Activated CD4-positive, alpha-beta memory T cell treated with anti-CD3 and anti-CD28 coated beads for 36 hours (primary cell): ENCODE measurements at regions of chr19 and their contacts with region 1.

Region 1: GRCh38 chr19:49896863-49897621 is at the start of gene IL4I1:
- DNase-seq: peak; percentile 87
- H3K4me3 Mint-ChIP-seq: peak within 1 kb of the TSS; percentile 87
- H3K27ac Mint-ChIP-seq: peak within 1 kb of the TSS; percentile 100
- H3K4me1 Mint-ChIP-seq: peaks cover 62% of the 10 kb centered on the region
- H3K27me3 Mint-ChIP-seq: no peaks in the 10 kb centered on the region
- total RNA-seq, gene IL4I1: 108 to 111 TPM

Region 2: DNA sequence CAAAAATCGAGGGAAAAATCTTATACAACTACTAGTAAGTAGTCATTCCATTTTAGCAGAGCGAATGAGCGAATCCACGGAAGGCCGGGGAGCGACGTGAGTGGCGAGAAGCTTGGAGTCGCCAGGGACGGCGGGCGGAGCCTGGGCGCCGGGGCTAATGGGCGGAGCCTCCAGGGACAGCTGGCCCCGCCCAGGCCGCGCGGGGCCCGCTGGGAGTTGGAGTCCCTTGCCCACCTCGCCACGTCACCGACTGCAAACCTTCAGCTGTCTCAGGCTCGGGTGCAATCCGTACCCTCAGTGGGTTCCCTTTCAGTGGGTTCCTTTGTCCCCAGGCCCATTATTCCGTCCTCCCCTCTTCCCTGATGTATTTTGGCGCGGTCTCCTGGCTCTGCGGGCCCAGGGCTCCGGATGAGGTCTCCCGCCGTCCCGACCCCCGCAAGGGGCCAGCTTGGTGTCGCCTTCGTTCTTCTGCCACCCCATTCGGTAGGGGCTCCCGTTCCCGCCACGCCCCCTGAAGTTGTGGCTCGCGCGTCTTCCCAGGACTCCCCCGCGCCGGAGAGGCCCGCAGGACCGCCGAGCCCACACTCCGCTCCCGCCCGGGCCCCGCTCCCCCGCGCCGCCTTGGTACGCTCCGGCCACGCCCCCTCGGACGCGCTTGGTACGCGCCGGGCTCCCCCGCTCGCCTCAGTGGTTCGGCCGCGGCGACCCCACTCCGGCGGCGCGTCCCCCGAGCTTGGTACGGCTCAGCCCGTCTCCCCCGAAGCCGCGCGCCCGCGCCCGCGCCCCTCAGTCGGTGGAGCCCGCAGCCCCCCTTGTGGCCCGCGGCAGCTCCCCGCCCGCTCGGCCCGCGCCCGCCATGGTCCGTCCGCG is 46.3 kb before region 1 on chr19 and contains the start of gene PTOV1:
- CTCF ChIA-PET with region 1: no interaction called
- POLR2A ChIA-PET with region 1: no interaction called
- intact Hi-C with region 1: loop called (anchors 2 kb)
- DNase-seq: peak; percentile 93
- H3K4me3 Mint-ChIP-seq: peak within 1 kb of the TSS; percentile 86
- H3K27ac Mint-ChIP-seq: peak within 1 kb of the TSS; percentile 95
- H3K4me1 Mint-ChIP-seq: peaks cover 41% of the 10 kb centered on the region
- H3K27me3 Mint-ChIP-seq: no peaks in the 10 kb centered on the region
- total RNA-seq, gene PTOV1: 105 to 108 TPM

Region 3: DNA sequence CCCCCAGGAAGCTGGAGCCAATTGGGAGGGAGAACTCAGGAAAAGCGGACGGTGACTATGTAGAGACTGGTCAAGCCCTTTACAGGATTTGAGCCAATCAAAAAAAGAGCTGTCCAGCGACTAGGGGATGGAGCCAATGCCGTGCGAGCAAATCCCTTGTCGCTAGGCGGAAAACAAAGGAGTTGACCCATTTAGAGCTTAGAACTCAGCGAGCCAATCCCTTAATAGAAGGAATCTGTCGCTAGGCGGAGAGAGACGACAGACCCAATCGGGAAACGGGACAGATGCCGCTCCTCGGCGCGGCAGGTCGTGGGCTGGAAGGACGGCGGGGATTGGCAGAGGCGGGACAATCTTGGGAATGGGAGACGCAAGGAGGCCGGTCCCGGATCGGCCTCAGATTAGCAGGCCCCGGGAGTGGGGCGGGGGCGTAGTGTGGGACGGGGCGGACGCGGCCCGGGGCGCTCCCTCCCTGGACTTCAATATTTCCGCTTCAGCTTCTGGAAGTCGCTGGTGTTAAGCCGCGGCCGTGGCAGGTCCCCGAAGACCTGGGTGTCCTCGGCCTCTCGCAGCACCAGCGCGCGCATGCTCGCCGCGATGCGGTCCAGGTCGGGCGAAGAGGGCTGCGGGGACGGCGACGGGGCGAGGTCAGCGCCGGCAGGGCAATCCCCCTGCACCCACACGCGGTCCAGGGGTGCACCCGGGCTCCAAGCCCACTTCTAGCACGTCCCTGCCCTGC is 27.4 kb before region 1 on chr19:
- CTCF ChIA-PET with region 1: interaction called, 4 read pairs
- POLR2A ChIA-PET with region 1: interaction called, 7 read pairs
- intact Hi-C with region 1: loop called (anchors 1 kb)
- DNase-seq: peak; percentile 96
- H3K4me3 Mint-ChIP-seq: no peak overlapping the region
- H3K27ac Mint-ChIP-seq: no peak overlapping the region
- H3K4me1 Mint-ChIP-seq: peaks cover 50% of the 10 kb centered on the region
- H3K27me3 Mint-ChIP-seq: no peaks in the 10 kb centered on the region

Region 4: DNA sequence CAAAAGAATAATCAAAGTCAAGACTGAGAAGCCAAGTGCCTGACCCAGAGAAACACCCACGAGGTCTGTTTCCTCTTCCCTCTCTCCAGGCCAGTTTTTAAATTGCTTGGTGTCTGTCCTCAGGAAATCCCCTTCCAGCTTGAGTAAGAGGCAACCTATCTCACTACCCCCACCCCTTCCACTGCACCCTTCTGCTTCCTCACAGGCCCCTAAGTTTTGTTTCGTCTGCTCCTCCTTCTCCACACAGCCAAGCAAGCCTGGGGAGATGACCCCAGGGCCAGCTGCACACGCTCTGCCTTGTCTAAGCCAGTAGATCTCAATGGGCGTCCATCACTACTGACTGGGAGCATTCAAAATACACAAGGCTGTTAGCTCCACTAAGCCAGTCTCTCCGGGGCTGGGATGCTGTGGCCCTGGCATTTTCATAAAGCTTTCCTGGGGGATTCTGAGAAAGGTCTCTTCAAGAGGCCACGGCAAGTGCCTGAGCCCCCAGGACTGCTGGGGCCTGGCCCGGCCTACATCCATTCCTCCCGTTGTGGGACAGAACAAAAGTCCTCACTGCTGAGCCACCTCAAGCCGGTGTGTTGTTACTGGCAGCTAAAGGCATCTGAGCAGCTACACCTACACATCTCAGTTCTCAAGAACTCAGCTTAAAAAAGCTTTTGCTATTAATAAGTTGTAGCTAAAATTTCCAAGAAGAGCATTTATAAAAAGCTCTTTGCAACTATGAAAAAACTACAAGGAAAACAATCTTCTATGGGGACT is 14.5 kb after region 1 on chr19:
- CTCF ChIA-PET with region 1: interaction called, 15 read pairs
- POLR2A ChIA-PET with region 1: interaction called, 77 read pairs
- intact Hi-C with region 1: loop called (anchors 1 kb)
- DNase-seq: peak; percentile 72
- H3K4me3 Mint-ChIP-seq: peak overlapping the region; percentile 51
- H3K27ac Mint-ChIP-seq: peak overlapping the region; percentile 97
- H3K4me1 Mint-ChIP-seq: peaks cover 78% of the 10 kb centered on the region
- H3K27me3 Mint-ChIP-seq: no peaks in the 10 kb centered on the region

Region 5: GRCh38 chr19:49929611-49930482 is 32.8 kb after region 1 on chr19:
- CTCF ChIA-PET with region 1: no interaction called
- POLR2A ChIA-PET with region 1: interaction called, 62 read pairs
- intact Hi-C with region 1: loop called (anchors 1 kb)
- DNase-seq: peak; percentile 96
- H3K4me3 Mint-ChIP-seq: peak overlapping the region; percentile 98
- H3K27ac Mint-ChIP-seq: peak overlapping the region; percentile 98
- H3K4me1 Mint-ChIP-seq: peaks cover 66% of the 10 kb centered on the region
- H3K27me3 Mint-ChIP-seq: peaks cover 5% of the 10 kb centered on the region